ENCODE measurements at regions of chr12 and their contacts with region 1.

Region 1: DNA sequence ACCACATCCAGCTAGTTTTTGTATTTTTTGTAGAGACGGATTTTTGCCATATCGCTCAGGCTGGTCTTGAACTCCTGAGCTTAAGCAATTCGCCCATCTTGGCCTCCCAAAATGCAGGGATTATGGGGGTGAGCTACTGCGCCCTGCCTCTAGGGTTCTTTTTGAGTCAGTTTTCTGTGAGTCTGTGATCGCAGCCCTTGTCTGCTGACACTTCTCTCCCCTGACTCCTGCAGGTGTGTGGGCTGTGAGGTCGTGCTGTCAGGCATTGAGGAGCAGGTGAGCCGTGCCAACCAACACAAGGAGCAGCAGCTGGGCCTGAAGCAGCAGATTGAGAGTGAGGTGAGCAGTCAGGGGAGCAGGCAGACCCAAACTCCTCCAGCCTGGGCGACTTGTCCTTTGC is 6.3 kb downstream of the COPS7A start:
- DNase-seq: no peak
- ATAC-seq: no peak
- H3K4me3 ChIP-seq: no peak overlapping the region
- H3K27ac ChIP-seq: no peak overlapping the region
- H3K4me1 ChIP-seq: no peaks in the 10 kb centered on the region
- H3K27me3 ChIP-seq: no peaks in the 10 kb centered on the region
- CTCF ChIP-seq: no peak
- POLR2A ChIP-seq: no peak

Region 2: DNA sequence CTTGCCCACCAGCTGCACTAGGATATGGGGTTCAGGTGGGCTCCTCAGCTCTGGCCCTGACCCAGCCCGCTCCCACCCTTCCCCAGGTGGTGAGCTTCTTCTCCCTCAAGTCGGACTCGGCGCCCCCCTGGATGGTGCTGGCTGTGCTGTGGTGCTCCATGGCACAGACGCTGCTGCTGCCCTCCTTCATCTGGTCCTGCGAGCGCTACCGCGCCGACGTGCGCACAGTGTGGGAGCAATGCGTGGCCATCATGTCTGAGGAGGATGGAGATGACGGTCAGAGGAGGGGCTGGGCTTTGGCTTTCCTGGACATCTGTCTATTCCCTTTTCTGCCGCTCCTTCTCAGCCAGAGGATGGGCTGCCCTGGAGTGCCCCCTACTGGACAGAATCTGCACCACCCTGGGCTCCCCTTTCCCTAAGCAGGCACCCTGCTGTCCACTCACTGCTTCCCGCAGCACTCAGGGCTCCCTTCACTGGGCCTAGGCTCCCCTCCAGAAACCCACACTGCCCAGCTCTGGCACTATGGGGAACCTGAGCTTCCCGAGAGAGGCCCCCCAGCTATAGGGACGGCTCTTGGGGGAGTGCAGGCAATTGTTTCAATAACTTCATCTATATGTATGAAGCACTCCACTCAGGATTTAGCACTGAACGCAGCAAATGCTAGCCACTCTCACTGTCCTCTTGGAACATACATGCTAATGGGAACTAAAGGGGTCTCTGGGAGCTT is 95.4 kb after region 1 on chr12:
- intact Hi-C with region 1: loop called in 1 of 2 experiments (anchors 5 kb)
- DNase-seq: peak; percentile 85 to 86 (median 85)
- ATAC-seq: peak; percentile 83 to 87 (median 84)
- H3K4me3 ChIP-seq: no peak overlapping the region
- H3K27ac ChIP-seq: no peak overlapping the region
- H3K4me1 ChIP-seq: peaks cover 0 to 10% (median 0%) of the 10 kb centered on the region in 4 donors
- H3K27me3 ChIP-seq: no peaks in the 10 kb centered on the region
- CTCF ChIP-seq: peak; percentile 94 to 95 (median 94)
- POLR2A ChIP-seq: no peak

Region 3: GRCh38 chr12:6839482-6840201 is 109.5 kb after region 1 on chr12:
- intact Hi-C with region 1: loop called in 1 of 2 experiments (anchors 5 kb)
- DNase-seq: no peak
- ATAC-seq: no peak
- H3K4me3 ChIP-seq: no peak overlapping the region
- H3K27ac ChIP-seq: no peak overlapping the region
- H3K4me1 ChIP-seq: no peaks in the 10 kb centered on the region
- H3K27me3 ChIP-seq: no peaks in the 10 kb centered on the region
- CTCF ChIP-seq: no peak
- POLR2A ChIP-seq: no peak

Measured in right lobe of liver (tissue), 6 donors.